PC-3 (cell line): ENCODE measurements at regions of chr3 and their contacts with region 1.

Region 1: DNA sequence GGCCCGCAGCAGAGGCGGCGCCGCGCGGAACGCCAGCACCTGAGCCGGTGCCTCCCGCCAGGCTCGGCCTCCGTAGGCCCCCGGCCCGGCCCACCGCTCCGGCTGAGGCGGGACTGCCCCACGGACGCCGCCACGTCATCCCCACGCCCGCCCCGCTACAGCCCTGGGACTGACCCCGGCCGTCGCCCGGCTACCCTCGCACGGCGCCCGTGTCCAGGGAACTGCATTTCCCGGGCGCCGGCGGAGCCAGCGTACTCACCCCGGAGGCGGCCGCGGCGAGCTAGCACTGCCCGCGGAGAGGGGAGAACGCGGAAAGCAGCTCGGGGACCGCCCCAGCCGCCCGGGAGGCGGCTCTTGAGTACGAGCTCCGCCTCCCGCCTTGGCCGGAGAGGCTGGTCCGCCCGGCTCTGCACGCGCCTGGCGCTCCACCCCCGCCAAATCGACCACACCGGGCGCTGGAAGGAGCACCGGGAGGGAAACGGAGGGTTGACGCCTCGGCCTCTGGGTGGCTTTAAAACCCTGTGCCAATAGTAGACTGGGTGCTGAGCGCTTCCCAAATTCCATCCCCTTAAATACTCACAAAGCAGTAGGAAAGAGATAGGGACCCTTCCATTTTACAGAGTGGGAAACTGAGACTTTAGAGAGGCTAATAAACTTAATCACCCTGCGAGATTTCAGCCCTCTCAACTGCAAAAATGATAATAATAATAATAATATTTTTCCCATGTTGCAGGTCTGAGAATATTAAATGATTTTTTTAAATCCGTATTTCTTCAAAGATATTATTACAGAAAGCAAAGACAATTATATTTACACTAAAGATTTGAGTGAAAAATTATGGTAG is at the start of gene B4GALT4:
- DNase-seq: peak; percentile 94
- ATAC-seq: peak; percentile 85
- H3K4me3 ChIP-seq: peak within 1 kb of the TSS; percentile 91
- H3K27ac ChIP-seq: peak within 1 kb of the TSS; percentile 63
- H3K4me1 ChIP-seq: peaks cover 18% of the 10 kb centered on the region
- H3K27me3 ChIP-seq: no peaks in the 10 kb centered on the region
- CTCF ChIP-seq: no peak
- total RNA-seq, gene B4GALT4: 37.6 and 40.8 TPM in 2 replicates

Region 2: DNA sequence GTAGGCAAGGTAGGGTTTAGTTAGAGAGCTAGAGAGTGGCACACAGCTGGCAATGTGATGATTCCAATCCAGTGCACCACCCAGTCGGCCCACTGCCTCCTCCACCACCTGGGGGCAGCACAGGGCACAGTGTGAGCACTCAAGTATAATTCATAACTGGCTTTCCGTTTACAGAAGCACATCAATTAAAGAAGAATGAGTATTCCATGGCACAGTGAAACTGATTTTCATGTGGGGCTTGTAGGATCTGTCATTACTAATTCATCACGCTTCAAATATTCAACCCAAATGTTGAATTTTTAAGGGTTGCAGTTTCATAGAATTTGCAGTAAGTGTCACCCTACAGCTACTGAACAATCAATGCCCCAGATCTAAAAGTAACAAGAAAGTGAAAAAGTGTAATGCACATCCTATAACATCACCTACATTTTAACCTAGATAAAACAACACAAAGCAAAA is 356.0 kb before region 1 on chr3:
- CTCF ChIA-PET with region 1: interaction called, 19 read pairs
- POLR2A ChIA-PET with region 1: no interaction called
- intact Hi-C with region 1: loop called (anchors 1 kb)
- DNase-seq: peak; percentile 77
- ATAC-seq: peak; percentile 91
- H3K4me3 ChIP-seq: no peak overlapping the region
- H3K27ac ChIP-seq: no peak overlapping the region
- H3K4me1 ChIP-seq: no peaks in the 10 kb centered on the region
- H3K27me3 ChIP-seq: peaks cover 50% of the 10 kb centered on the region
- CTCF ChIP-seq: peak; percentile 99

Region 3: GRCh38 chr3:119034256-119035013 is 206.4 kb before region 1 on chr3 and contains the start of gene IGSF11:
- CTCF ChIA-PET with region 1: interaction called, 13 read pairs
- POLR2A ChIA-PET with region 1: no interaction called
- intact Hi-C with region 1: loop called (anchors 10 kb)
- DNase-seq: peak; percentile 68
- ATAC-seq: peak; percentile 89
- H3K4me3 ChIP-seq: peak within 1 kb of the TSS; percentile 79
- H3K27ac ChIP-seq: no peak within 1 kb of the TSS
- H3K4me1 ChIP-seq: peaks cover 6% of the 10 kb centered on the region; the same call in 1 of the 2 replicates
- H3K27me3 ChIP-seq: peaks cover 62% of the 10 kb centered on the region
- CTCF ChIP-seq: peak; percentile 77
- total RNA-seq, gene IGSF11: 0.66 TPM in 1 of 2 replicates, not detected in the other

Region 4: GRCh38 chr3:119098619-119099222 is 142.1 kb before region 1 on chr3:
- CTCF ChIA-PET with region 1: interaction called, 28 read pairs
- POLR2A ChIA-PET with region 1: no interaction called
- intact Hi-C with region 1: loop called (anchors 1 kb)
- DNase-seq: peak; percentile 81
- ATAC-seq: peak; percentile 55
- H3K4me3 ChIP-seq: no peak overlapping the region
- H3K27ac ChIP-seq: no peak overlapping the region
- H3K4me1 ChIP-seq: no peaks in the 10 kb centered on the region
- H3K27me3 ChIP-seq: no peaks in the 10 kb centered on the region; the same call in 1 of the 2 replicates
- CTCF ChIP-seq: peak; percentile 94

Region 5: DNA sequence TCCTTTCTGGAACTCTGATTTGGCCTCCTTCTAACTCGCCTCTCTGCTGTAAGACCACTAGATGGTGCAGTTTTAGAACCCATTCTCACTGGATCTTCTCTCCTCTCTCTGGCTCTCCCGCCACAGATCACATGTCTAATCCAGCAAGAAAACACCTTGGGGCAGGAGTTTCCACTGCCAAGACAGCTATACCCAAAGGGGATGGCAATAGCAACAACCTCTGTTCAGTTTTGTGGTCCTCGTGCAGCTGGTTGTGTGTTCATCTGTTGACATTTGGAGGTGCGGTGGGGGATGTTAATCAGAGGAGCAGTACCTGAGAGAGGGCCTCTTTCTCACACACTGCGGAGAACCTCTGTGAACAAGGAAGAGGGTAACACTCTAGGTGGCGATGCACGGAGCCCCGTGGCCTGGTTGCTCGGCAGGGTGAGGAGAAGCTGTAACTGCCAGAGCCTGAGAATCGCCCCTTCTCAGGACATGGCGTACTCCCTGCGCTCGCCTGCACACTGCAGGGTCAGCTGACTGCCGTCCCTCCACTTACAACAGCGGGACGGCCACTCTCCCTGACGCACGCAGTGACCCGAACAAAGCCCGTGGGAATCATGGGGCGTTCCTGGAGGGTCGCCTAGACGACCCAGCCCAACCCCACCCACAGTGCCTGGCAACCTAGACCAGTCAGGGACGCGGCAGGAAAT is 95.2 kb before region 1 on chr3 and contains the start of gene TEX55:
- CTCF ChIA-PET with region 1: interaction called, 15 read pairs
- POLR2A ChIA-PET with region 1: interaction called, 11 read pairs
- intact Hi-C with region 1: loop called (anchors 1 kb)
- DNase-seq: peak; percentile 87
- ATAC-seq: peak; percentile 75
- H3K4me3 ChIP-seq: no peak within 1 kb of the TSS
- H3K27ac ChIP-seq: peak within 1 kb of the TSS; percentile 2; the same call in 1 of the 2 replicates
- H3K4me1 ChIP-seq: peaks cover 25% of the 10 kb centered on the region
- H3K27me3 ChIP-seq: no peaks in the 10 kb centered on the region
- CTCF ChIP-seq: peak; percentile 94
- total RNA-seq, gene TEX55: 0.33 TPM in 1 of 2 replicates, not detected in the other

Region 6: GRCh38 chr3:119175872-119176756 is 64.7 kb before region 1 on chr3:
- CTCF ChIA-PET with region 1: interaction called, 8 read pairs
- POLR2A ChIA-PET with region 1: no interaction called
- intact Hi-C with region 1: loop called (anchors 2 kb)
- DNase-seq: peak; percentile 87
- ATAC-seq: peak; percentile 73
- H3K4me3 ChIP-seq: peak overlapping the region; percentile 26; the same call in 1 of the 2 replicates
- H3K27ac ChIP-seq: peak overlapping the region; percentile 92
- H3K4me1 ChIP-seq: peaks cover 34% of the 10 kb centered on the region
- H3K27me3 ChIP-seq: no peaks in the 10 kb centered on the region
- CTCF ChIP-seq: no peak

Region 7: GRCh38 chr3:119184796-119185570 is 55.8 kb before region 1 on chr3:
- CTCF ChIA-PET with region 1: interaction called, 5 read pairs
- POLR2A ChIA-PET with region 1: interaction called, 5 read pairs
- intact Hi-C with region 1: loop called (anchors 1 kb)
- DNase-seq: peak; percentile 99
- ATAC-seq: peak; percentile 75
- H3K4me3 ChIP-seq: peak overlapping the region; percentile 51
- H3K27ac ChIP-seq: peak overlapping the region; percentile 98
- H3K4me1 ChIP-seq: peaks cover 74% of the 10 kb centered on the region
- H3K27me3 ChIP-seq: no peaks in the 10 kb centered on the region
- CTCF ChIP-seq: no peak